ENCODE measurements at regions of chr12 and their contacts with region 1.

Region 1: DNA sequence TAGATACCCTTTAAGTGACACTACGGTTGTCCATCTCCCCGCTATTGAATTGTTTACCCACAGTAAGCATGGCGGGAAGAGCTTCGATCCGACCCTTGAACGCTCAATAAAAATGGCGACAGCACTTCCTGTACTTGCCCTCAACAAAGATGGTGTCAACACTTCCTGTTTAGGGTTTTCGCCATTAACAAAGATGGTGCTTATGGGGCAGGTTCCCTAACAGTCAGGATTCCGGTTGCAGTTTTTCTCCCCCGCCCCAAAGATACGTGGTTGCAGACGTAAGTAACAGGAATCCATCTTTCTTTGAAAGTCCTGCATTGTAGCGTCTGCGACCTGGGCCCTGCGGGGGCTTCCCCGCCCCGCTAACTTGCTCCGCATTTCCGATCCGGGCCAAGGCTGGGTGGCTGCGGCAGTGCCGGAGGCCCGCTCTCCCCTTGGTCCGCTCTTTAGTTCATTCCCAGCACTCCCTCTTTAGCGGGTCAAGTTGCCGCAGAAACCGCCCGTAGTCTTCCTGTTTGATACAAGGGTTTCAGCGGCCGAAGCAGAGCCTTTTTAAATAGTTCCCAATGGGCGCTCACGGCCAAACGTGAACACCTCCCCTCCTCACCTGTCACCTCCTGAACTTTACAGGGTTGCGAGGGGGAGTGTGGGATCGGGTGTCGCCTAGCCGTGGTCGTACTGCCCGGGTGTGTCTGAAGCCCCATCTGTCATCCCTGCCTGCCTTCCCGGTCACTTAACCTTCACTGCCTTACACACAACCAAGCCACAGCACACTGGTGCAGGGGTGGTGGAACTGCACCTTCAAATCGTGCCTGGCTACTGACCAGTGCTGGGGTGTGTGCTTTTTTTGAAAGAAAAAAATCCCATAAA is at the start of gene CRADD:
- DNase-seq: peak; percentile 65 to 99 (median 83)
- ATAC-seq: peak; percentile 95
- H3K4me3 ChIP-seq: peak within 1 kb of the TSS; percentile 67 to 83
- H3K4me3 Mint-ChIP-seq: peak within 1 kb of the TSS; percentile 98
- H3K27ac ChIP-seq: peak within 1 kb of the TSS; percentile 95 to 97
- H3K27ac Mint-ChIP-seq: peak within 1 kb of the TSS; percentile 100
- H3K4me1 ChIP-seq: peaks cover 8% of the 10 kb centered on the region
- H3K4me1 Mint-ChIP-seq: peaks cover 41% of the 10 kb centered on the region
- H3K27me3 ChIP-seq: no peaks in the 10 kb centered on the region
- H3K27me3 Mint-ChIP-seq: peaks cover 13% of the 10 kb centered on the region
- CTCF ChIP-seq: no peak
- total RNA-seq, gene CRADD: 5.3 to 5.7 TPM

Region 2: DNA sequence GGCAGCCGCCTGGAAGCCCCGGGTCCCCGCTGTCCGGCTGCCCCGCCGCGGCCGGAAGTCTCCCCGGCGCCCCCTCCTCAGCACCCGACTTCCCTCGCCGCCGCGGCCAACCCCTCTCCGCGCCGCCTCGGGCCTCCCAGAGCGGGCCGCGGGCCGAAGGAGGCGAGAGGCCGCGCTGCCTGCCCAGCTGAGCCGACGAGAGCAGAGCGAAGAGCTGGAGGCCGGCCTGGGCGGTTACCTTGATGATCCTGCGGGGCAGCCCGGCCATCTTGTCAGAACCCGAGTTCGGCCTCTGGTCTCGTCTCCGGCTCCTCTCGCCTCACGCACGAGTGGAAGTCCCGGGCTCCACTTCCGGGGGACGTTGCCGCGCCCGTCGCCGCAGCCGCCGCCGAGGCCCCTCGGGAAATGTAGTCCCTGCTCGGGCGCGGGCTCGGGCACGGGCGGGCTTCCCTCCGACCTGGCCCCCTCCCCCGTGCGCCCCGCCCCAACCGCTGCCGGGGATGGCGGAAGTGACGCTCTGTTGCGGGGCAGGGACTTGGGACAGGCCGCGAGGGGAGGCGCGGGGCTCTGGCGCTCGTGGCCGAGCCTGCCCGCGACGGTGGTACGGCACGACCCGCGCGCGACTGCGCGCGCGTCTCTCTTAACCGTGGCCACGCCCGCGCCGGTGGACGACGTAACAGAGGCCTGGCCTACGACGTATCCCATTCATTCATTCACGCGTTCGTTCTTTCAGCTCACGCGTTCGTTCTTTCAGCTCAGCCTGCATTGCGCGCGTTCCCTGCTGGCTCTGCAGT is 235.6 kb before region 1 on chr12 and contains the start of gene UBE2N:
- CTCF ChIA-PET with region 1: no interaction called
- POLR2A ChIA-PET with region 1: interaction called, 4 read pairs
- intact Hi-C with region 1: loop called (anchors 1 kb)
- DNase-seq: peak; percentile 92 to 97 (median 96)
- ATAC-seq: peak; percentile 83
- H3K4me3 ChIP-seq: peak within 1 kb of the TSS; percentile 78
- H3K4me3 Mint-ChIP-seq: peak within 1 kb of the TSS; percentile 97
- H3K27ac ChIP-seq: peak within 1 kb of the TSS; percentile 87 to 90
- H3K27ac Mint-ChIP-seq: peak within 1 kb of the TSS; percentile 96
- H3K4me1 ChIP-seq: peaks cover 47% of the 10 kb centered on the region
- H3K4me1 Mint-ChIP-seq: peaks cover 48% of the 10 kb centered on the region
- H3K27me3 ChIP-seq: no peaks in the 10 kb centered on the region
- H3K27me3 Mint-ChIP-seq: no peaks in the 10 kb centered on the region
- CTCF ChIP-seq: no peak
- total RNA-seq, gene UBE2N: 89.5 to 93.6 TPM

Region 3: GRCh38 chr12:93591137-93591868 is 86.1 kb before region 1 on chr12:
- CTCF ChIA-PET with region 1: no interaction called
- POLR2A ChIA-PET with region 1: no interaction called
- intact Hi-C with region 1: loop called in 1 of 2 experiments (anchors 2 kb)
- DNase-seq: peak in 8 of 9 experiments; percentile 8 to 58 (median 36)
- ATAC-seq: peak; percentile 74
- H3K4me3 ChIP-seq: peak overlapping the region; percentile 40 to 44
- H3K4me3 Mint-ChIP-seq: peak overlapping the region; percentile 80
- H3K27ac ChIP-seq: no peak overlapping the region
- H3K27ac Mint-ChIP-seq: no peak overlapping the region
- H3K4me1 ChIP-seq: peaks cover 11% of the 10 kb centered on the region
- H3K4me1 Mint-ChIP-seq: peaks cover 13% of the 10 kb centered on the region
- H3K27me3 ChIP-seq: peaks cover 22 to 24% of the 10 kb centered on the region in 2 experiments
- H3K27me3 Mint-ChIP-seq: peaks cover 59% of the 10 kb centered on the region
- CTCF ChIP-seq: no peak

Region 4: GRCh38 chr12:94033101-94033500 is 355.7 kb after region 1 on chr12:
- CTCF ChIA-PET with region 1: no interaction called
- POLR2A ChIA-PET with region 1: no interaction called
- intact Hi-C with region 1: loop called in 1 of 2 experiments (anchors 1 kb)
- DNase-seq: peak in 2 of 9 experiments; percentile 25 to 50
- ATAC-seq: peak; percentile 81
- H3K4me3 ChIP-seq: no peak overlapping the region
- H3K4me3 Mint-ChIP-seq: peak overlapping the region; percentile 54
- H3K27ac ChIP-seq: no peak overlapping the region
- H3K27ac Mint-ChIP-seq: peak overlapping the region; percentile 71
- H3K4me1 ChIP-seq: peaks cover 36% of the 10 kb centered on the region
- H3K4me1 Mint-ChIP-seq: peaks cover 40% of the 10 kb centered on the region
- H3K27me3 ChIP-seq: no peaks in the 10 kb centered on the region
- H3K27me3 Mint-ChIP-seq: peaks cover 3% of the 10 kb centered on the region
- CTCF ChIP-seq: no peak

Region 5: GRCh38 chr12:94459728-94460615 is 782.5 kb after region 1 on chr12 and contains the start of gene CEP83:
- CTCF ChIA-PET with region 1: no interaction called
- POLR2A ChIA-PET with region 1: no interaction called
- intact Hi-C with region 1: loop called (anchors 1 to 2 kb)
- DNase-seq: peak; percentile 90 to 98 (median 97)
- ATAC-seq: peak; percentile 96
- H3K4me3 ChIP-seq: peak within 1 kb of the TSS; percentile 94 to 96
- H3K4me3 Mint-ChIP-seq: peak within 1 kb of the TSS; percentile 96
- H3K27ac ChIP-seq: peak within 1 kb of the TSS; percentile 91 to 93
- H3K27ac Mint-ChIP-seq: peak within 1 kb of the TSS; percentile 94
- H3K4me1 ChIP-seq: peaks cover 6% of the 10 kb centered on the region
- H3K4me1 Mint-ChIP-seq: peaks cover 33% of the 10 kb centered on the region
- H3K27me3 ChIP-seq: peaks cover 0 to 2% of the 10 kb centered on the region in 2 experiments
- H3K27me3 Mint-ChIP-seq: peaks cover 5% of the 10 kb centered on the region
- CTCF ChIP-seq: no peak
- total RNA-seq, gene CEP83: 9.7 to 11.2 TPM

Region 6: GRCh38 chr12:95224202-95225170 is 1547.1 kb after region 1 on chr12:
- CTCF ChIA-PET with region 1: no interaction called
- POLR2A ChIA-PET with region 1: no interaction called
- intact Hi-C with region 1: loop called in 1 of 2 experiments (anchors 10 kb)
- DNase-seq: no peak
- ATAC-seq: no peak
- H3K4me3 ChIP-seq: no peak overlapping the region
- H3K4me3 Mint-ChIP-seq: no peak overlapping the region
- H3K27ac ChIP-seq: no peak overlapping the region
- H3K27ac Mint-ChIP-seq: no peak overlapping the region
- H3K4me1 ChIP-seq: no peaks in the 10 kb centered on the region
- H3K4me1 Mint-ChIP-seq: peaks cover 56% of the 10 kb centered on the region
- H3K27me3 ChIP-seq: no peaks in the 10 kb centered on the region
- H3K27me3 Mint-ChIP-seq: no peaks in the 10 kb centered on the region
- CTCF ChIP-seq: no peak

Measured in CD8-positive, alpha-beta T cell (primary cell).